ENCODE measurements at regions of chr16 and their contacts with region 1.

Region 1: DNA sequence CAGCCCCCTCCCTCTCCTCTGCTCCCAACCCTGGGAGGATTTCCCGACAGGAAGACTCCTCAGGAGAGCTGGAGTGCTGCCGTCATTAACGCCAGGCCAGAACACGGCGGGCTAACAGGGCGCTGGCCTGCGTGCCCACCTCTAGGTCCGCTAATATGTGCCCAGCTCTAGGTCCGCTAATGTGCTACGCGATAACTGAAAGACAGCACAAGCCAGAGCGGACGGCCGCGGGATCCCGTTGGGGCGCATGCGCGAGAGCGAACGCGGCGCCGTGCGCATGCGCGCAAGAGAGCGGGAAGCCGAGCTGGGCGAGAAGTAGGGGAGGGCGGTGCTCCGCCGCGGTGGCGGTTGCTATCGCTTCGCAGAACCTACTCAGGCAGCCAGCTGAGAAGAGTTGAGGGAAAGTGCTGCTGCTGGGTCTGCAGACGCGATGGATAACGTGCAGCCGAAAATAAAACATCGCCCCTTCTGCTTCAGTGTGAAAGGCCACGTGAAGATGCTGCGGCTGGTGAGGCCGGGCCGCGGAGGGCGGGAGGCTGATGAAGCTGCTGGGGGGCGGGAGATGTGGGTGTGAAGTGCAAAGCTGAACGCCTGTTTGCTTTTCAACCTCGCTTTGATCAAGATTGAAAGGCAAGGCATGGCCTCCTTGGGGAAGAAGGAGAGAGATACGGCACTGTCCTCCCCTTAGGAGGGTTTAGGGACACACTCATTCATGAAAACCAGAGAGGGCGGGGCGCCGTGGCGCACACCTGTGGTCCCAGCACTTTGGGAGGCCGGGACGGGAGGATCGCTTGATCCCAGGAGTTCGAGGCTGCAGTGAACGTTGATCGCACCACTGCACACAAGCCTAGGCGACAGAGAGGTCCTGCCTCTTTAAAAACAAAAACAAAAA is at the start of gene CKLF:
- DNase-seq: peak; percentile 94
- ATAC-seq: peak; percentile 74
- H3K4me3 Mint-ChIP-seq: peak within 1 kb of the TSS; percentile 98
- H3K27ac Mint-ChIP-seq: peak within 1 kb of the TSS; percentile 96
- H3K4me1 Mint-ChIP-seq: peaks cover 80% of the 10 kb centered on the region
- H3K27me3 Mint-ChIP-seq: no peaks in the 10 kb centered on the region
- total RNA-seq, gene CKLF: 199 to 220 TPM

Region 2: DNA sequence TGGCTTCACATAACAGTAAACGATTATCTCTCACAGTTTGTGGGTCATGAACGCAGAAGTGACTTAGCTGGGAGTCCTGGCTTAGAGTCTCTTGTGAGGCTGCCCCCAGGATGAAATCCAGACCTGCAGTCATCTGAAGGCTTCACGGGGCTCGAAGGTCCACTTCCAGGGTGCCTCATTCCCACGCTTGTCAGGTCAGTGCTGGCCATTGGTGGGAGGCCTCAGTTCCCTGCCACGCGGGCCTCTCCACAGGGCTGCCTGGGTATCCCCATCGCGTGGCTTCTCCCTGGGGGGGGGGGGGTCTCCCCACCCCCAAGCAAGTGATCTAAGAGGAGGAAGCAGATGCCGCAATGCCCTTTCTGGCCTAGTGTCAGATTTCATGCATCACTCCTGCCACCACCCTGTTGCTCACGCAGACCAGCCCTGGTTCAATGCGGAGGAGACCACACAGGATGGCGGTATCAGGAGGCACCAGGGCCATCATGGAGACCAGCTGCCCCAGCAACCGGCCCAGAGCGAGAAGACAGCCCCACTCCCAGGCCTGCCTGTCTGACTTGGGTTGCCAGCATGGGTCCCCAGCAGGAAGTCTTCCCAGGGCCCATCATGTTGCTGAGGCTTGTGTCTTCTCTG is 263.4 kb before region 1 on chr16:
- CTCF ChIA-PET with region 1: no interaction called
- DNase-seq: peak; percentile 37
- ATAC-seq: no peak
- H3K4me3 Mint-ChIP-seq: no peak overlapping the region
- H3K27ac Mint-ChIP-seq: no peak overlapping the region
- H3K4me1 Mint-ChIP-seq: no peaks in the 10 kb centered on the region
- H3K27me3 Mint-ChIP-seq: peaks cover 7% of the 10 kb centered on the region

Region 3: GRCh38 chr16:66521951-66522771 is 30.4 kb before region 1 on chr16:
- CTCF ChIA-PET with region 1: interaction called, 52 read pairs
- DNase-seq: peak; percentile 98
- ATAC-seq: peak; percentile 84
- H3K4me3 Mint-ChIP-seq: peak overlapping the region; percentile 62
- H3K27ac Mint-ChIP-seq: peak overlapping the region; percentile 92
- H3K4me1 Mint-ChIP-seq: peaks cover 94% of the 10 kb centered on the region
- H3K27me3 Mint-ChIP-seq: no peaks in the 10 kb centered on the region

Region 4: GRCh38 chr16:66596986-66597848 is 44.7 kb after region 1 on chr16:
- CTCF ChIA-PET with region 1: interaction called, 18 read pairs
- DNase-seq: peak; percentile 57
- ATAC-seq: peak; percentile 72
- H3K4me3 Mint-ChIP-seq: peak overlapping the region; percentile 47
- H3K27ac Mint-ChIP-seq: peak overlapping the region; percentile 96
- H3K4me1 Mint-ChIP-seq: peaks cover 48% of the 10 kb centered on the region
- H3K27me3 Mint-ChIP-seq: no peaks in the 10 kb centered on the region

Region 5: DNA sequence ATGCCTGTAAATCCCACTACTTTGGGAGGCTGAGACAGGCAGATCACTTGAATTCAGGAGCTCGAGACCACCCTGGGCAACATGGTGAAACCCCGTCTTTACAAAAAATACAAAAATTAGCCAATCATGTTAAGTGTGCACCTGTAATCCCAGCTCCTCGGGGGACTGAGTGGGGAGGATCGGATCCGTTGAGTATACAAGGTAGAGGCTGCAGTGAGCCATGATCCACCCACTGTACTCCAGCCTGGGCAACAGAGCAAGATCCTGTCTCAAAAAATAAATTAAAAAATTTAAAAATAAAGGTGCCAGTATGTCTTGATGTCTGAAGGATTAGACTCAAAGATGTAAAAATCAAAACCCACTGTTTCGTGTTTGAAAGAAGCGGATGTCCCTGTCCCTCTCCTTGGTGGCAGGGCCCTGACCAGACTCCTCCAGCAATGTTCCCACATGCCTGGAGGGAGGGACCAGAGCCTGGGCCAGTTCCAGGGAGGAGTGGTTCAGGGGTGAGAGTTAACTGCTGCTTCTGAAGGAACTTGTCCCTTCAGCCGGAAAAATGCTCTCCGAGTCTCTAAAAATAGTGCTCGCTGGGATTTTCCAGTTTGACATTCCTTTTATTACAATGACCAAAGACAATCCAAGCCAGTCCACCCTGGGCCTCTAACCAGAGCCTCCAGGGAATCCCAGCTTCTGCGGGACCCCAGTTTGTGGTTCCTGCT is 153.4 kb after region 1 on chr16:
- CTCF ChIA-PET with region 1: no interaction called
- DNase-seq: no peak
- ATAC-seq: no peak
- H3K4me3 Mint-ChIP-seq: no peak overlapping the region
- H3K27ac Mint-ChIP-seq: no peak overlapping the region
- H3K4me1 Mint-ChIP-seq: peaks cover 1% of the 10 kb centered on the region
- H3K27me3 Mint-ChIP-seq: peaks cover 19% of the 10 kb centered on the region

Measured in activated CD8-positive, alpha-beta memory T cell treated with anti-CD3 and anti-CD28 coated beads, Interleukin-2, amount 10 ng/mL, durations not matched to agents 7 days and 5 days (primary cell).